Right ventricle myocardium inferior (tissue), 1 donor: ENCODE measurements at regions of chr3 and their contacts with region 1.

Region 1: GRCh38 chr3:59049671-59050331 is at the start of gene CFAP20DC:
- DNase-seq: peak; percentile 95
- ATAC-seq: peak; percentile 98
- total RNA-seq, gene CFAP20DC: 0.22 TPM

Region 2: GRCh38 chr3:58640700-58641372 is 409.0 kb before region 1 on chr3:
- intact Hi-C with region 1: loop called (anchors 5 kb)
- DNase-seq: peak; percentile 84
- ATAC-seq: peak; percentile 79

Region 3: DNA sequence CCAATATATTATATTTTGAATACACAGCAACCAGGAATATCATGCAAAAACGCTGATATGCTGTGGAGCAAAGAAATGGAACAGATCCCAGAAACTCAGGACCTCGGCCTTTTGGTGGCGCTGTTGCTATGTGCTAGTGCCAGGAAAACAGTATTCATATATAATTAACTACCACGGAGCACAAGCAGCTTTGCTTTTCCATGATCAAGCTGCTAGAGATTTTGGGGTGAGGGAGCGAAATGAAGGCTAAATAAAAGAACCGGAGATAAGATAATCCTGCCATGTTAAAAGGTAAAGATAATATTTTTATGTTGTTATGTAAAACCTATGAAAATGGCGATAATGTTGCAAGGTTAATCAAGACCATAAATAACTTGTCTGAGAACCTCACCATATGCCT is 225.5 kb before region 1 on chr3:
- intact Hi-C with region 1: loop called (anchors 10 kb)
- DNase-seq: no peak
- ATAC-seq: no peak